ENCODE measurements at regions of chr12 and their contacts with region 1.

Region 1: GRCh38 chr12:57983146-57983857 is 41.9 kb downstream of the ATP23 start:
- DNase-seq: peak in 5 of 14 experiments; percentile 2 to 43 (median 15)
- ATAC-seq: no peak
- H3K4me3 ChIP-seq: no peak overlapping the region
- H3K4me3 Mint-ChIP-seq: no peak overlapping the region
- H3K27ac ChIP-seq: no peak overlapping the region
- H3K27ac Mint-ChIP-seq: no peak overlapping the region
- H3K4me1 ChIP-seq: no peaks in the 10 kb centered on the region
- H3K4me1 Mint-ChIP-seq: no peaks in the 10 kb centered on the region
- H3K27me3 ChIP-seq: peaks cover 0 to 11% of the 10 kb centered on the region in 2 experiments
- H3K27me3 Mint-ChIP-seq: peaks cover 22% of the 10 kb centered on the region
- CTCF ChIP-seq: no peak

Region 2: DNA sequence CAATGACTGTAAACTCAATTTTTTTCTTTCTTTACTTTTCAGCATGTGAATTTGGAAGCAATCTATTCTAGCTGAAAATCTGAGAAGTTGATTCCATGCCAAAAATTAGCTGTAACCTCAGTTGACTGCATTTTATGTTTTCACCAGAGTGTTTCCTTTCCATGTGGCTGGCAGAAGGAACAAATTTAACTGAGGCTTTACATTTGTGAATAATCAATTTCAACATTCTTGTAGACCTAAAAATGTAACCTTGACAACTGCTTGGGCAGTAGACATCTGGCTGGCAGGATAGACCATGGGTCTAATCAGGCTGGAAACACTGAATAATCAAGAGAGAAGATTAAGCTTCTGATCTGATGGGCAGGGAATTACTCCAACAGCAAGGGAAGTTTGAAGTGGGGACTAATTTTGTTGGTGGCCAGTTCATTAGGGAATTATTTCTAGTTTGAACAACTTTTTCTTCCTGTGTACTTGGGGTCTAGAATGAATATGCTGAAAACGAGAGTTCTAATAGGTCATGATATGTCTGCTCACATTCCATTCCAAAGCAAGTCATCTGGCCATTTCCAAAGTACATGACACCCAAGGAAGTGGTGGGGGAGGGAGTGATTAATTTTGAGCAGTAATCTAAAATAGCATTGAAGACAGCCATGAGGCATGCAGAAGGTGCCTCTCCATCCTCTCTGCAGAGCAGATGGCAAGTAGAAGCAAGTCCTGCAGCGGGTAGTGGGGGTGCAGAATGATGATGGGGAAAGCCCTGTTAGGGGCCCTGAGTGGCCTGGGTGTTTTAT is 26.3 kb after region 1 on chr12:
- CTCF ChIA-PET with region 1: no interaction called
- POLR2A ChIA-PET with region 1: no interaction called
- intact Hi-C with region 1: no loop called
- DNase-seq: no peak
- ATAC-seq: no peak
- H3K4me3 ChIP-seq: no peak overlapping the region
- H3K4me3 Mint-ChIP-seq: no peak overlapping the region
- H3K27ac ChIP-seq: no peak overlapping the region
- H3K27ac Mint-ChIP-seq: no peak overlapping the region
- H3K4me1 ChIP-seq: no peaks in the 10 kb centered on the region
- H3K4me1 Mint-ChIP-seq: no peaks in the 10 kb centered on the region
- H3K27me3 ChIP-seq: peaks cover 0 to 2% of the 10 kb centered on the region in 2 experiments
- H3K27me3 Mint-ChIP-seq: peaks cover 16% of the 10 kb centered on the region
- CTCF ChIP-seq: no peak

Region 3: GRCh38 chr12:58046271-58046670 is 63.0 kb after region 1 on chr12:
- CTCF ChIA-PET with region 1: no interaction called
- POLR2A ChIA-PET with region 1: no interaction called
- intact Hi-C with region 1: no loop called
- DNase-seq: peak in 1 of 14 experiments; percentile 3
- ATAC-seq: no peak
- H3K4me3 ChIP-seq: no peak overlapping the region
- H3K4me3 Mint-ChIP-seq: no peak overlapping the region
- H3K27ac ChIP-seq: no peak overlapping the region
- H3K27ac Mint-ChIP-seq: no peak overlapping the region
- H3K4me1 ChIP-seq: no peaks in the 10 kb centered on the region
- H3K4me1 Mint-ChIP-seq: no peaks in the 10 kb centered on the region
- H3K27me3 ChIP-seq: peaks cover 8 to 13% of the 10 kb centered on the region in 2 experiments
- H3K27me3 Mint-ChIP-seq: peaks cover 38% of the 10 kb centered on the region
- CTCF ChIP-seq: no peak

Region 4: DNA sequence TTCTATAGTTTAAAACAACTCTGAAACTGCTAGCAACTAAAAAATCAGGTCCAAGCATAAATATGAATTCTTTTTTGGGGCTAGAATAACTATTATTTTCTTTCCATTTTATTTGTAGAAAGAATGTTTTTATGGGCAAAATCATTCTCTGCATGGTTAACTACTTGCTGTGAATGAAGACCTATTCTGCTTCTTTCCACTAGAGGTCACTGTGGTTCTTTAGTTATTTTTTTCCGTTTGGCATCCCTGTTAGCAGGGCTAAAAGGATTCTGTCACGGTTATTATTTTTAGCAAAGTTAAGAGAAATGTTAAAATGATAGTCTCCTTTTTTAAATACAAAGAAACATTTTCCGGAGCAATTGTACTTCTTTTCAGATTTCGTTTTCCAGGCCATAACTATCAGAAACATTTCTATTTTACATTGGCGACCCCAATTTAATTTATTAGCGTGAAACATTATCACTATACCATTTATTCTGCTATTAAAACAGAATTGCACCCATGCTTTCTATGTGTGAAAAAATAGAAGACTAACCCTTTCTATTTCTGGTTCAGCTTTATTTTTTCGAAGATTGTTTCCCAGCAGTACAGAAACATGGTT is 362.8 kb after region 1 on chr12:
- CTCF ChIA-PET with region 1: no interaction called
- POLR2A ChIA-PET with region 1: no interaction called
- intact Hi-C with region 1: loop called in 1 of 2 experiments (anchors 5 kb)
- DNase-seq: peak in 3 of 14 experiments; percentile 25 to 40 (median 26)
- ATAC-seq: peak; percentile 39
- H3K4me3 ChIP-seq: no peak overlapping the region
- H3K4me3 Mint-ChIP-seq: no peak overlapping the region
- H3K27ac ChIP-seq: no peak overlapping the region
- H3K27ac Mint-ChIP-seq: no peak overlapping the region
- H3K4me1 ChIP-seq: no peaks in the 10 kb centered on the region
- H3K4me1 Mint-ChIP-seq: no peaks in the 10 kb centered on the region
- H3K27me3 ChIP-seq: no peaks in the 10 kb centered on the region
- H3K27me3 Mint-ChIP-seq: peaks cover 26% of the 10 kb centered on the region
- CTCF ChIP-seq: peak; percentile 84

Region 5: GRCh38 chr12:59149997-59150642 is 1166.8 kb after region 1 on chr12:
- CTCF ChIA-PET with region 1: no interaction called
- POLR2A ChIA-PET with region 1: no interaction called
- intact Hi-C with region 1: loop called in 1 of 2 experiments (anchors 10 kb)
- DNase-seq: peak in 3 of 14 experiments; percentile 38 to 43 (median 41)
- ATAC-seq: peak; percentile 63
- H3K4me3 ChIP-seq: no peak overlapping the region
- H3K4me3 Mint-ChIP-seq: no peak overlapping the region
- H3K27ac ChIP-seq: no peak overlapping the region
- H3K27ac Mint-ChIP-seq: no peak overlapping the region
- H3K4me1 ChIP-seq: no peaks in the 10 kb centered on the region
- H3K4me1 Mint-ChIP-seq: no peaks in the 10 kb centered on the region
- H3K27me3 ChIP-seq: no peaks in the 10 kb centered on the region
- H3K27me3 Mint-ChIP-seq: no peaks in the 10 kb centered on the region
- CTCF ChIP-seq: peak; percentile 50

Region 6: DNA sequence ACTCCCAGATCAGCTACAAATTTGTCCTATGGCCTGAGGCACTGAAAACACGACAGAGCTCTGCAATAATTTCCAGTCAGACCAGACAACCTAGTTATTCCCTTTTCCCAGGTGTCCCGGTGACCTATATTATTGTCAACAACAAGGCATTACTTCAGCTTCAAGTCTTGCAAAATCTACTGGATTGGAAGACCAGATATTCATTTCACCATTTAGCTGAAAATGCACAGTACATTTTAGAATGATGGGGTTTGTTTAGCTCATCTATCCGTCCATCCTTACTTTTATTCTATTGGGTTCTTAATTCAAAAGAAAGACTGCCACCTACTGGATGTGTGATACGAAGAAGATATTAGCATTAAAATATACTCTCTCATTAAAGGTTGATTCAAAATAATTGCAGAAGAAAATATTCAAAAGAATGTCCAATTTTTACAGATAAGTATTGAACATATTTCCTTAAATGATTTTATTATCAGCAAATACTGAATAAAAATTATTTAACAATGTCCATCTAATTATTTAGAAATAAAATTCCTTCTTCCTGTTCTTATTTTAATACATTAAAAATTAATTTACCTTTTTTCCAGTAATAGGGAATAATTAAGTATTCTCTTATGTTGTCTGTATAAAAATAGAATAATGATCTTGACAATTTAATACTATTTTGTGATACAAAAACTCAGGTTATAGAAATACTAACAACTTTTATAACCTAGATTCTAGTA is 1181.9 kb after region 1 on chr12:
- CTCF ChIA-PET with region 1: no interaction called
- POLR2A ChIA-PET with region 1: no interaction called
- intact Hi-C with region 1: loop called in 1 of 2 experiments (anchors 10 kb)
- DNase-seq: peak in 1 of 14 experiments; percentile 3
- ATAC-seq: no peak
- H3K4me3 ChIP-seq: no peak overlapping the region
- H3K4me3 Mint-ChIP-seq: no peak overlapping the region
- H3K27ac ChIP-seq: no peak overlapping the region
- H3K27ac Mint-ChIP-seq: no peak overlapping the region
- H3K4me1 ChIP-seq: no peaks in the 10 kb centered on the region
- H3K4me1 Mint-ChIP-seq: no peaks in the 10 kb centered on the region
- H3K27me3 ChIP-seq: no peaks in the 10 kb centered on the region
- H3K27me3 Mint-ChIP-seq: no peaks in the 10 kb centered on the region
- CTCF ChIP-seq: peak; percentile 20

Measured in CD4-positive, alpha-beta T cell (primary cell).